ENCODE measurements at regions of chr18 and their contacts with region 1.

Region 1: DNA sequence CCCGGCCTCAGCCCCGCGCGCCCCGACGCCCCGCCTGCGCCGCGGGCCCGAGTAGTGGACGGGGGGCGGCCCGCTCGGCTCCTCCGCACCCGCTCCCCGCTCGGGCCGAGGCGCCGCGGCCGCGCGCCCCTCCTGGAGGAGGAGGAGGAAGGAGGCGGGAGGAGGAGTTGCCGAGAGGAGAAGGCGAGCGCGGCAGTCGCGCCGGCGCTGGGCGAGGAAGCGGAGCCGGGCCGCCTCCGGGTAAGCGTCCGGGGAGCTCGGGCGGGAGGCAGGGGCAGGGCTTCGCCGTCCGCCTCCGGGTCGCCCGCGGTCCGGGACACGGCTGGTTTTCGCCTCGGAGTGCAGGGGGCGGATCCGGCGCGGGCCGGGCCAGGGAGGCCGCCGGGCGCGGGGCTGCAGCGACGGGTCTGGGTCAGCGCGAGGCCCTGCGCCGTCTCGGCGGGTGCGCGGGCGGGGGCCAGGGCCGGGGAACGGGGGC is at the start of gene SOCS6:
- DNase-seq: peak; percentile 13 to 41
- ATAC-seq: peak; percentile 67 to 72
- H3K4me3 ChIP-seq: peak within 1 kb of the TSS; percentile 68 to 74 (median 72)
- H3K27ac ChIP-seq: peak within 1 kb of the TSS; percentile 75 to 91 (median 90)
- H3K4me1 ChIP-seq: peaks cover 33 to 34% of the 10 kb centered on the region in 2 donors
- H3K27me3 ChIP-seq: no peaks in the 10 kb centered on the region
- CTCF ChIP-seq: no peak
- POLR2A ChIP-seq: peak in 1 of 2 donors; percentile 20
- total RNA-seq, gene SOCS6: 12.8 to 26.8 (median 16.3) TPM

Region 2: DNA sequence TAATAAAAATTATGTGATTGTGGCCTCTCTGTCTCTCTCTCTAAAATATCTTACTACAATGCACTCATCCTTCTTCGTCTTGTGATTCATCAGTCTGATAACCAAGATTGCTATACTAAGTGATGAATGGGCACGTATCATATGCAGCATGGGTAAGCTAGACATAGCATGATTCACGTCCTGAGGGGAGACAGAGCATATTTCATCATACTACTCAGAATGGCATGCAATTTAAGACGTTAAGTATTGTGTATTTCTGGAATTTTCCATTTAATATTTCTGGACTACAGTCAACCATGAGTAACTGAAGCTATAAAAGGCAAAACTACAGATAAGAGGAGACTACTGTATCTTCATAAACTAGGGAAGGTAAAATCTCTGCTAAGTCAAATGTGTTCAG is 244.3 kb before region 1 on chr18:
- in situ Hi-C with region 1: no loop called
- intact Hi-C with region 1: no loop called
- DNase-seq: no peak
- ATAC-seq: no peak
- H3K4me3 ChIP-seq: no peak overlapping the region
- H3K27ac ChIP-seq: no peak overlapping the region
- H3K4me1 ChIP-seq: peaks cover 0 to 4% of the 10 kb centered on the region in 2 donors
- H3K27me3 ChIP-seq: no peaks in the 10 kb centered on the region
- CTCF ChIP-seq: no peak
- POLR2A ChIP-seq: no peak

Region 3: DNA sequence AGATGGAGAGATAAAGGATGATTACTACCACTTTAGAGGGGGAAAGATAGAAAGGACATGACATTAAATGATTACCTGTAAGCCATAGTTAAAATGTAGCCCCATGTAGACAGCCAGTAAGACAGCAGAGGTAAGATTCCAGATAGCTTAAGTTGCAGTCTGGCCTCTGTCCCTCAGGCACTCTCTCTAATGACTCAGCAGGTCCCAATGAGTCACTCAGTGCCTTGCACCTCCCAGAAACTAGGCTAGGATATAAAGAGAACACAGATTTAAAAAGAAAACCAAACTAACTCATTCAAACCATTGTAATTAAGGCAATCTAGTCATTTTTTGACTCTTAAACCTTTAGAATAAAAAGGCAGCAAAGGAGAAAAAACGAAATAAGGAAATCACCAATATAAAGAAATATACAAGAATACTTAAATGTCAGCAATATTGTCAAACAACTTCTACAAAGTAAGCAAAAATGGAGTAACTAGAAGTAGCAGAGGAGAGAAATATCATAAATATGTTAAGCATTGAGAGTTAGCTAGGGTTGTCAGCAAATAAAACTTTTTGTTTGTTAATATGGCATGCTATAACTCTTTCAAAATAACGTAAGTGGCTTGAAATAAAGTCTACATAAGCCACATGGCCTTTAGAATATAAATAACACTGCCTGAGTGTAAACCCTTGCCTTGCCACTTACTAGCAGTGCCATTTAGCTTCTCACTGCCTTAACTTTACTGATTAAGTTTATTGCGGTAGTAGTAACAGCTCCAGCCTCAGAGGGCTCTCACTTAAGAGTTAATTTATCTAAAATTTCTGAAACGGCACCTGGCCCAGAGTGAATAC is 48.5 kb after region 1 on chr18:
- in situ Hi-C with region 1: no loop called
- intact Hi-C with region 1: loop called (anchors 5 kb)
- DNase-seq: peak; percentile 73 to 85
- ATAC-seq: peak; percentile 99 to 100
- H3K4me3 ChIP-seq: peak overlapping the region in 2 of 4 donors; percentile 21 to 23
- H3K27ac ChIP-seq: peak overlapping the region; percentile 82 to 91 (median 87)
- H3K4me1 ChIP-seq: peaks cover 33% of the 10 kb centered on the region in 2 donors
- H3K27me3 ChIP-seq: no peaks in the 10 kb centered on the region
- CTCF ChIP-seq: no peak
- POLR2A ChIP-seq: no peak

Region 4: GRCh38 chr18:70431203-70431624 is 142.3 kb after region 1 on chr18:
- in situ Hi-C with region 1: no loop called
- intact Hi-C with region 1: loop called (anchors 2 kb)
- DNase-seq: no peak
- ATAC-seq: no peak
- H3K4me3 ChIP-seq: no peak overlapping the region
- H3K27ac ChIP-seq: no peak overlapping the region
- H3K4me1 ChIP-seq: no peaks in the 10 kb centered on the region
- H3K27me3 ChIP-seq: no peaks in the 10 kb centered on the region
- CTCF ChIP-seq: no peak
- POLR2A ChIP-seq: no peak